Calu3 (cell line): ENCODE measurements at regions of chr13 and their contacts with region 1.

Region 1: DNA sequence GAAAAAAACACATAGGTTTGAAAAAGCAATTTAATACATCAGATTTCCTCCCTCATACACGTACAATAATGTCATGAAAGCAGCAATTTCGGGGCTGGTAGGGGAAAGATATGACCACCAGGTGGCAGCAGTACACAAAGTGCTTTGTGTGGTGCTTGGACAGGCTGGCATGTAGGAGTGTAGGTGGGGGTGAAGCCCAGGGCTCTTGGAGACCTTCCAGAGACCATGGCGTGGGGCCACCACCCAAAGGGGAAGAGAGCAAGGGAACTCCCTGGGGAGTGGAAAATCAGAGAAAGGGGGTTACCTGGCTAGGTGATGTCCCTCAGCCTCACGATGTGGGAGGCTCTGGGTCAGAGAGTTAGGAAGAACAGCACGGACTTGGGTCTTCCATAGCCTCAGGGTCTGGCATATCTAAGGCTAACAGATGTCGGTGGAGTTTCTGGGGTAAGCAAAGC is 11.8 kb upstream of the CCNA1 start:
- DNase-seq: peak; percentile 75
- H3K4me3 Mint-ChIP-seq: no peak overlapping the region
- H3K27ac Mint-ChIP-seq: no peak overlapping the region
- H3K4me1 Mint-ChIP-seq: peaks cover 28% of the 10 kb centered on the region
- H3K27me3 Mint-ChIP-seq: no peaks in the 10 kb centered on the region
- CTCF ChIP-seq: peak; percentile 61

Region 2: GRCh38 chr13:36454987-36455386 is 34.5 kb after region 1 on chr13:
- CTCF ChIA-PET with region 1: no interaction called
- intact Hi-C with region 1: no loop called
- DNase-seq: no peak
- H3K4me3 Mint-ChIP-seq: no peak overlapping the region
- H3K27ac Mint-ChIP-seq: no peak overlapping the region
- H3K4me1 Mint-ChIP-seq: no peaks in the 10 kb centered on the region
- H3K27me3 Mint-ChIP-seq: no peaks in the 10 kb centered on the region
- CTCF ChIP-seq: no peak

Region 3: DNA sequence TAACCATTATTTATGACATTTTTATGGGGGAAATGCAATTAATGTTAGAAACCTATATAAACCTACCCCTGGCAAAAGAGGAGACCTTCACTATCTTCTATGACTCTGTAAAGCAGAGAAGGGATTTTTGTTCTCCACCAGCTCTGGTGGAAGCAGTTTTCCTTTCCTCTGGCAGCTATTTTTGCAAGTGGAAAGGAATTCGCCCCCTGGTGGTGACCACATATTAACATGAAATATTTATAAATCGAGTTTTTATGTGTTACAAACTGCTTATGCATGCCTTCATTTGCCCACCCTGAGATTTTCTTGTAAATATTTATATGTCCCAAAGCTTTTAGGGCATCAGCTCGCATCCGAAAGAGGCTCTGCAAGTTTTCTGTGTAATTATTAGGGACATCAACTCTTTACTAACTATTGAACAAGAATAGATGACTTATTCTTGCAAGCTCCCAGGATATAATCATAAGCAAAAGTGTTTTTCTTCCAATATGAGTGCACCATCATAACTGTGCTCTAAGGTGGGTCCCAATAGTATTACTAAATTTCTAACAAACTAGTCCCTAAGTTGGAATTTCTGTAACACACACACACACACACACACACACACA is 315.8 kb after region 1 on chr13:
- CTCF ChIA-PET with region 1: no interaction called
- intact Hi-C with region 1: loop called (anchors 2 kb)
- DNase-seq: peak; percentile 47
- H3K4me3 Mint-ChIP-seq: no peak overlapping the region
- H3K27ac Mint-ChIP-seq: no peak overlapping the region
- H3K4me1 Mint-ChIP-seq: no peaks in the 10 kb centered on the region
- H3K27me3 Mint-ChIP-seq: no peaks in the 10 kb centered on the region
- CTCF ChIP-seq: peak; percentile 71

Region 4: DNA sequence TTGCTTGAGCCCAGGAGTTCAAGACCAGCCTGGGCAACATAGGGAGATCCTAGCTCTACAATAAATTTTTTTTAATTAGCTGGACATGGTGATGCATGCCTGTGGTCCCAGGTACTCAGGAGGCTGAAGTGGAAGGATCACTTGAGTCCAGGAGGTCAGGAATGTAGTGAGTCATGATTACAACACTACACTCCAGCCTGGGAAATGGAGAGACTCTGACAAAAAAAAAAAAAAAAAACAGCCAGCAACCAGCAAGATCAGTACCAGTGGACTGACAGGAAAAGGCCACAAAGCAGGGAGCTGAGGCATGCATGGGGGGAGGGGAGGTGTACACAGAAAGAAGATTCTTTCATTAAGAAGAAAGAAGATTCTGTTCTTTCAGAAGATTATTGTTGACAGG is 345.9 kb after region 1 on chr13:
- CTCF ChIA-PET with region 1: no interaction called
- intact Hi-C with region 1: loop called (anchors 10 kb)
- DNase-seq: peak; percentile 26
- H3K4me3 Mint-ChIP-seq: no peak overlapping the region
- H3K27ac Mint-ChIP-seq: peak overlapping the region; percentile 72
- H3K4me1 Mint-ChIP-seq: peaks cover 43% of the 10 kb centered on the region
- H3K27me3 Mint-ChIP-seq: no peaks in the 10 kb centered on the region
- CTCF ChIP-seq: no peak

Region 5: DNA sequence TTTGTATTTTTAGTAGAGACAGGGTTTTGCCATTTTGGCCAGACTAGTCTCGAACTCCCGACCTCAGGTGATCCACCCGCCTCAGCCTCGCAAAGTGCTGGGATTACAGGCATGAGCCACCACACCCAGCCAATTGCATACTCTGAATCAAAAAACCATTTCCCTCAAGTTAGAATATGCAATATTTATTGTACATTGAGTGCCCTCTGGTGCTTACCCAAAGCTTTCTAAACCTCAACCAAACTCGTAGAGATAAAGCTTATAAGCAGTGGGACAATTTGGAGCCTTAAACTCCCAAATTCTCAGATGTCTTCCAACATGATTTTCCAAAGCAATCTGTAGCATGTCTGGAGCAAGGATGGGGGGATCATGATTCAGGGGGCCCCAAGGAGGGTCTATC is 420.9 kb after region 1 on chr13:
- CTCF ChIA-PET with region 1: no interaction called
- intact Hi-C with region 1: loop called (anchors 1 kb)
- DNase-seq: peak; percentile 1
- H3K4me3 Mint-ChIP-seq: no peak overlapping the region
- H3K27ac Mint-ChIP-seq: no peak overlapping the region
- H3K4me1 Mint-ChIP-seq: no peaks in the 10 kb centered on the region
- H3K27me3 Mint-ChIP-seq: no peaks in the 10 kb centered on the region
- CTCF ChIP-seq: no peak

Region 6: DNA sequence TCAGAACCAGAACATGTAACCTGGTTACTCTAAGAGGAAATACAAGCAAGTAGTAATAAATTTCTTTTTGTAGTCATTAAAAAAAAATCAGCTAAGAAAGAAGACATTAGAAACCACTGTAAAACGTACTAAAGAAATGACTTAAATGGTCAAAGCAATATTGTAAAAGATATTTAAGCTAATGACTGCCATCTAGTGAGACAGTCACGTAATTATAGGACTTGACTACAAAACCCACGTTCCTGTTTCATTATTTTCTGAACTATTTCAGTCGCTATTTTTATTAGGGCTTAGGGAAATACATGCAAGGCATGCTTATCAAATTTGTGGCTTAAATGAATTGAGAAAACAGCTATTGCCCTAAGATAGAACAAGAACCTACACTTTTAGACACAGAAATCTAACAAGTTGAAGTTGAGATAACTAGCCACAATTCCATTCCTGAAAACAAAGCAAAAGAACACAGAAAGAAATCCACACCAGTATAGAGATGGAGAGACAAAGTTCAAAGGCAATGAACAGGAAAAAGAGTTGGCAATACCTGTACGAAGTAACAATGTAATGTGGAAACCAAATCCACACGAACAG is 560.8 kb after region 1 on chr13:
- CTCF ChIA-PET with region 1: no interaction called
- intact Hi-C with region 1: loop called (anchors 10 kb)
- DNase-seq: no peak
- H3K4me3 Mint-ChIP-seq: no peak overlapping the region
- H3K27ac Mint-ChIP-seq: no peak overlapping the region
- H3K4me1 Mint-ChIP-seq: no peaks in the 10 kb centered on the region
- H3K27me3 Mint-ChIP-seq: no peaks in the 10 kb centered on the region
- CTCF ChIP-seq: peak; percentile 16